Naive thymus-derived CD4-positive, alpha-beta T cell (primary cell): ENCODE measurements at regions of chr10 and their contacts with region 1.

Region 1: GRCh38 chr10:6667679-6668270 is 87.7 kb upstream of the PRKCQ start:
- DNase-seq: peak in 6 of 9 donors; percentile 17 to 45 (median 30)
- ATAC-seq: peak; percentile 59
- H3K4me3 ChIP-seq: no peak overlapping the region
- H3K4me3 Mint-ChIP-seq: no peak overlapping the region
- H3K27ac ChIP-seq: no peak overlapping the region
- H3K27ac Mint-ChIP-seq: no peak overlapping the region
- H3K4me1 ChIP-seq: peaks cover 0 to 10% of the 10 kb centered on the region in 2 donors
- H3K4me1 Mint-ChIP-seq: peaks cover 12 to 35% (median 24%) of the 10 kb centered on the region in 7 donors
- H3K27me3 ChIP-seq: no peaks in the 10 kb centered on the region
- H3K27me3 Mint-ChIP-seq: peaks cover 0 to 13% (median 0%) of the 10 kb centered on the region in 5 donors

Region 2: GRCh38 chr10:6416892-6417512 is 250.8 kb before region 1 on chr10:
- CTCF ChIA-PET with region 1: interaction called, 10 read pairs
- POLR2A ChIA-PET with region 1: interaction called, 4 read pairs
- intact Hi-C with region 1: loop called (anchors 1 kb)
- DNase-seq: peak in 7 of 9 donors; percentile 36 to 59 (median 43)
- ATAC-seq: peak; percentile 88
- H3K4me3 ChIP-seq: no peak overlapping the region
- H3K4me3 Mint-ChIP-seq: no peak overlapping the region
- H3K27ac ChIP-seq: no peak overlapping the region
- H3K27ac Mint-ChIP-seq: no peak overlapping the region
- H3K4me1 ChIP-seq: no peaks in the 10 kb centered on the region
- H3K4me1 Mint-ChIP-seq: peaks cover 0 to 6% (median 0%) of the 10 kb centered on the region in 7 donors
- H3K27me3 ChIP-seq: no peaks in the 10 kb centered on the region
- H3K27me3 Mint-ChIP-seq: no peaks in the 10 kb centered on the region

Region 3: DNA sequence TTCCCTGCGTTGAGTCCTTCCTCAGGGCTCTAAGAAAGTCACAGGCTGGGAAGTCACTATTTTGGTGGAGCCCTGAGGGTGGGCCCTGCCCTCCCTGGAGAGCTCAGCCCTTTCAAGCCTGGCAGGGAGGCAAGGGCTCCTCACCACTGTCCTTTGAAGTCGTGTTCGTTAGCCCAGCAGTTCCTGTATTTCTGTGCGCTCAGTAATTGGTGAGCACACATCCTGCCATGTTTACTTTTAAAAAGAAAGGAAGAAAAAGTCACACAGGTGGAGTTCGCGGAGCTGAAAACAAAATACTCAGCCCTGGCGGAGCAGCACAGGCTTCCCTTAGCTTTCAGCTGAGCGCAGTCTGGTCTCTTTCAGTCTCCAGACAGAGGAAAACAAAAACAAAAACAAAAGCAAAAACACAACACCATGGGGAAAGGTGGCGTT is 124.8 kb before region 1 on chr10:
- CTCF ChIA-PET with region 1: no interaction called
- POLR2A ChIA-PET with region 1: no interaction called
- intact Hi-C with region 1: loop called in 1 of 2 experiments (anchors 2 kb)
- DNase-seq: peak in 8 of 9 donors; percentile 45 to 83 (median 78)
- ATAC-seq: peak; percentile 90
- H3K4me3 ChIP-seq: peak overlapping the region; percentile 64
- H3K4me3 Mint-ChIP-seq: peak overlapping the region; percentile 79 to 95 (median 88)
- H3K27ac ChIP-seq: peak overlapping the region; percentile 73
- H3K27ac Mint-ChIP-seq: peak overlapping the region; percentile 97 to 100 (median 99)
- H3K4me1 ChIP-seq: peaks cover 55 to 66% of the 10 kb centered on the region in 2 donors
- H3K4me1 Mint-ChIP-seq: peaks cover 43 to 90% (median 76%) of the 10 kb centered on the region in 7 donors
- H3K27me3 ChIP-seq: no peaks in the 10 kb centered on the region
- H3K27me3 Mint-ChIP-seq: no peaks in the 10 kb centered on the region

Region 4: DNA sequence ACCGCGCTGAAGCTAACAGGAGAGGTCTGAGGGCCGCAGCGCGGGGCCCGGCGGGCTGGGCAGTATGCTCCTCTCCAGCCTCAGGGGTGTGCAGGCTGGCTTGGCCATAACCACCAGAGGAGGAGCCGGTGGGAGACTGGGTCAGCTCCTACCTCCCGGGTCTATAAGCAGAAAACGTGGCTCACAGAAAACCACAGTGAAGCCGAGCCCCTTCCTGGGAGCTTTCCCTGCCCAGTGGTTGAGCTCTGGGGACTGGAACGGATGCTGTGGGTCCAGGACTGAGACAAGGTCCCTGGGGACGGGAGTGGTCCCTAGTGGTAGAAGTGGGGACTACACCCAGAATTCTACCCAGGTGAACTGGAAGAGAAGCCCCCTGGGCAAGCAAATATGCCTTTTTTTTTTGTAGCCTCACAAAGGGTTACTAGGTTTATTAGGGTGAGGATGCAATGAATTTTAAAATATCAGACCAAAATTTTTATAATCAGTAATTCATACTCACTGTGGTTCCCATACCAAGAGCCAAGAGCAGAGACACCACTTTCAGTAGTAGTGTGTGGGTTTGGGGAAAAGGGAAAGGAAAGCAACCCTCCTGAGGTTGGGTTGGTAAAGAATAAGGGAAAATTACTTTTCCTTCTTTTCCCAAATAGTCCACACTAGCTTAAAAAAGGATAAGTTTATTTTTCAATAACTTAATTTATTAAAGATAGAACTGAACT is 19.8 kb before region 1 on chr10:
- CTCF ChIA-PET with region 1: interaction called, 7 read pairs
- POLR2A ChIA-PET with region 1: interaction called, 3 read pairs
- intact Hi-C with region 1: loop called (anchors 1 to 2 kb)
- DNase-seq: peak; percentile 37 to 75 (median 64)
- ATAC-seq: peak; percentile 94
- H3K4me3 ChIP-seq: no peak overlapping the region
- H3K4me3 Mint-ChIP-seq: peak overlapping the region in 1 of 10 donors; percentile 32
- H3K27ac ChIP-seq: no peak overlapping the region
- H3K27ac Mint-ChIP-seq: peak overlapping the region in 3 of 9 donors; percentile 19 to 67 (median 38)
- H3K4me1 ChIP-seq: peaks cover 5 to 10% of the 10 kb centered on the region in 2 donors
- H3K4me1 Mint-ChIP-seq: peaks cover 0 to 46% (median 27%) of the 10 kb centered on the region in 7 donors
- H3K27me3 ChIP-seq: no peaks in the 10 kb centered on the region
- H3K27me3 Mint-ChIP-seq: no peaks in the 10 kb centered on the region

Region 5: DNA sequence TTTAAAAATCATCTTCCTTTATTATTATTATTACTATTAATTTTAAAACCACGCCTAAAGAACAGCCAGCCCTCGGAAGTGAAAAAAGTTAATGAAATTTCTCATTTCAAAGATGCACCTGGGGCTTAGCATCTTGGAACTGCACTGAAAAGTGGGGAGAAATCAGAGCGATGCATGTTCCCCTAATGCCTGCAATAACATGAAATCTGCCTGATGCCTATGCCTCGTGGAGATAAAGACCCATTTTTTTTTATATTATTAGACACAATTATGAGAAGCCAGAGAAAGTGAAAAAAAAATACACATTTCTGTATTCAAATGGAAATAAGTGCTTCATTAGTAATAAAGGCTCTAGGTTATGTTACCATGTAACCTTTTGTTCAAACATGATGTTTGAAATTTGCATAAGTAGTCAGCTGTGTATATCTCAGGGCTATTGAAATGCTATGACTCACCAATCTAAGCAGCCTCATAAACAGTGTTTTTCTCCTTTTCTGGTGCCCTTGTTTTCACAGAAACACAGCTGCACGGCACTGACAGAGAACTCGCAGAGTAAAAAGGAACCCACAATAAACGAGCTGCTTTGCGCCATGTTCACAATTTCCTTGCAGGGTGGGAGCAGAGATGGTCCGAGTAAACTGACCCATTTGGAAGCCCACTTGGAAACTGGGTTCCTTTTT is 88.1 kb after region 1 on chr10:
- CTCF ChIA-PET with region 1: no interaction called
- POLR2A ChIA-PET with region 1: no interaction called
- intact Hi-C with region 1: no loop called
- DNase-seq: no peak
- ATAC-seq: no peak
- H3K4me3 ChIP-seq: no peak overlapping the region
- H3K4me3 Mint-ChIP-seq: no peak overlapping the region
- H3K27ac ChIP-seq: no peak overlapping the region
- H3K27ac Mint-ChIP-seq: no peak overlapping the region
- H3K4me1 ChIP-seq: no peaks in the 10 kb centered on the region
- H3K4me1 Mint-ChIP-seq: no peaks in the 10 kb centered on the region
- H3K27me3 ChIP-seq: no peaks in the 10 kb centered on the region
- H3K27me3 Mint-ChIP-seq: peaks cover 38 to 53% (median 49%) of the 10 kb centered on the region in 5 donors

Region 6: GRCh38 chr10:7121154-7121810 is 453.5 kb after region 1 on chr10:
- CTCF ChIA-PET with region 1: no interaction called
- POLR2A ChIA-PET with region 1: no interaction called
- intact Hi-C with region 1: no loop called
- DNase-seq: peak; percentile 54 to 86 (median 79)
- ATAC-seq: peak; percentile 97
- H3K4me3 ChIP-seq: no peak overlapping the region
- H3K4me3 Mint-ChIP-seq: peak overlapping the region in 1 of 10 donors; percentile 42
- H3K27ac ChIP-seq: no peak overlapping the region
- H3K27ac Mint-ChIP-seq: peak overlapping the region; percentile 36 to 97 (median 85)
- H3K4me1 ChIP-seq: no peaks in the 10 kb centered on the region
- H3K4me1 Mint-ChIP-seq: peaks cover 6 to 13% (median 8%) of the 10 kb centered on the region in 7 donors
- H3K27me3 ChIP-seq: no peaks in the 10 kb centered on the region
- H3K27me3 Mint-ChIP-seq: peaks cover 0 to 44% (median 0%) of the 10 kb centered on the region in 5 donors